ENCODE measurements at regions of chr11 and their contacts with region 1.

Region 1: GRCh38 chr11:59429924-59430516 is 3.8 kb upstream of the OR5A2 start:
- DNase-seq: peak; percentile 66 to 78 (median 66)
- H3K4me3 ChIP-seq: no peak overlapping the region
- H3K4me3 Mint-ChIP-seq: no peak overlapping the region
- H3K27ac ChIP-seq: no peak overlapping the region
- H3K27ac Mint-ChIP-seq: no peak overlapping the region
- H3K4me1 ChIP-seq: no peaks in the 10 kb centered on the region
- H3K4me1 Mint-ChIP-seq: no peaks in the 10 kb centered on the region
- H3K27me3 ChIP-seq: no peaks in the 10 kb centered on the region
- H3K27me3 Mint-ChIP-seq: peaks cover 0 to 3% (median 1%) of the 10 kb centered on the region in 3 donors
- CTCF ChIP-seq: peak; percentile 89

Region 2: GRCh38 chr11:58813693-58814092 is 616.3 kb before region 1 on chr11:
- intact Hi-C with region 1: no loop called
- DNase-seq: no peak
- H3K4me3 ChIP-seq: no peak overlapping the region
- H3K4me3 Mint-ChIP-seq: no peak overlapping the region
- H3K27ac ChIP-seq: no peak overlapping the region
- H3K27ac Mint-ChIP-seq: no peak overlapping the region
- H3K4me1 ChIP-seq: no peaks in the 10 kb centered on the region
- H3K4me1 Mint-ChIP-seq: no peaks in the 10 kb centered on the region
- H3K27me3 ChIP-seq: no peaks in the 10 kb centered on the region
- H3K27me3 Mint-ChIP-seq: peaks cover 0 to 2% (median 0%) of the 10 kb centered on the region in 3 donors
- CTCF ChIP-seq: no peak

Region 3: DNA sequence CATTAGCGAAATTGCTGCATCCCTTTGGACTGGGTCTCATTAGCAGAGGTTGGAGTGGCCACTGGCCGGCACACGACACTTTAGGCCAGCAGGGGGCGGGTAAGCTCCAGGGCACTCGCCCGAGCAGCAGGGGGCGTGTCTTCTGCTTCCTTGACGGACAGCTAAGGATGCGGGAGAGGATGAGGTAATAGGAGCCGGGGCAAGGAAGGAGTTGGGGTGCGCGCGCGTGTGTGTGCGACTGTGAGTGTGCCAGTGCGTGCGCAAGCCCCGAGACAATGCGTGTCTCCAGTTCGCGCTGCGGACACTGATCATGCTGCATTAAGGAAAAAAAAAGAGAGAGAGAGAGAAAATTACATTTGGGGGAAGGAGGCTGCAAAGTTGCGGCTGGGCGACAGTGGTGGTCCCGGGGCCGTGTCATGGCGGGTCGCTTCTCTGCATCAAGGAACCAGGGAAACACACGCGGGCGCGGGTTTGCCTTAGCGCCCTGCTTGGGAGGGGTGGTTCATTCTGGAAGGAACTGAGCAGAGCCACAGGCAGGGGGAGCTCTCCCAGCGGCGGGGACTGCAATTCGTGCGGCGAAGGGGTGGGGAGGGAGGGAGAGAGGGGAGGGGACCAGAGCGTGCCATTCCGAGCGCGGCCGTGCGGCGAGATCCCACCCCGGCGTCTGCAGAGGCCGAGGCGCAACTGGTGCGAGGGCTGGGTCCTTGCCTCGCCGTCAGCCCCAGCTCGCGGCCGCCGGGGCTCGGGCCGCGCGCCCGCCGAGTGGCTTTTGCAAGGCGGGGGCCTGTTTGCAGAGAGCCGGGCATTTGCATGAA is 258.3 kb before region 1 on chr11 and contains the start of gene DTX4:
- intact Hi-C with region 1: loop called (anchors 2 to 5 kb)
- DNase-seq: peak; percentile 87 to 96 (median 90)
- H3K4me3 ChIP-seq: peak within 1 kb of the TSS; percentile 65 to 82 (median 67)
- H3K4me3 Mint-ChIP-seq: peak within 1 kb of the TSS; percentile 90 to 97
- H3K27ac ChIP-seq: peak within 1 kb of the TSS; percentile 31 to 71
- H3K27ac Mint-ChIP-seq: peak within 1 kb of the TSS in 3 of 7 donors; percentile 21 to 66 (median 27)
- H3K4me1 ChIP-seq: peaks cover 14 to 17% of the 10 kb centered on the region in 2 donors
- H3K4me1 Mint-ChIP-seq: peaks cover 20% of the 10 kb centered on the region
- H3K27me3 ChIP-seq: peaks cover 0 to 9% of the 10 kb centered on the region in 2 donors
- H3K27me3 Mint-ChIP-seq: peaks cover 15 to 22% (median 20%) of the 10 kb centered on the region in 3 donors
- CTCF ChIP-seq: peak; percentile 92
- polyA plus RNA-seq, gene DTX4: 0.96 to 1.9 (median 1.1) TPM

Region 4: GRCh38 chr11:59289356-59290181 is 140.5 kb before region 1 on chr11:
- intact Hi-C with region 1: loop called (anchors 5 to 10 kb)
- DNase-seq: peak; percentile 23 to 49 (median 31)
- H3K4me3 ChIP-seq: peak overlapping the region in 1 of 3 experiments; percentile 17
- H3K4me3 Mint-ChIP-seq: peak overlapping the region; percentile 47 to 71
- H3K27ac ChIP-seq: peak overlapping the region; percentile 44 to 67
- H3K27ac Mint-ChIP-seq: peak overlapping the region; percentile 63 to 88 (median 83)
- H3K4me1 ChIP-seq: peaks cover 27 to 41% of the 10 kb centered on the region in 2 donors
- H3K4me1 Mint-ChIP-seq: peaks cover 40% of the 10 kb centered on the region
- H3K27me3 ChIP-seq: no peaks in the 10 kb centered on the region
- H3K27me3 Mint-ChIP-seq: peaks cover 0 to 9% (median 1%) of the 10 kb centered on the region in 3 donors
- CTCF ChIP-seq: no peak

Measured in CD14-positive monocyte (primary cell).